ENCODE measurements at regions of chr14 and their contacts with region 1.

Region 1: DNA sequence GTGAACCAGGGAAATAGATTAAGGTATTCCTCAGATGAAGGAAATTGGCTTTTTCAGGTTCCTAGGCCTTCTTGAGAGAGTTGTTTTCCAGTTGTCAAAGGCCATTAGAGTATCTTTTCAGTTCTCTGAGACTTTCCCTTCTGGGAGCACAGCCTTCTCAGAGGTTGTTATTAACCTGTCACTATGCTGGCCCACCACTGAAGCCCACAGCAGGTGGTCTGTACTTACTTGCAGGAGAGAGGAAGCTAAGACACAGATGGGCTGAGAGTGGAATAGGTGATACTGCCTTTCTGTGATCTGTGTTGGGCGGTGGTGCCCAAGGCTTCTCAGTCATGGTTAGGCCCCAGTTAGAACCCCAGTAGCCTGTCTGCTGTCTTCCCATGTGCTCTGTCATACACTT is 22.8 kb upstream of the GALNT16 start:
- DNase-seq: no peak
- H3K4me3 ChIP-seq: no peak overlapping the region
- H3K4me3 Mint-ChIP-seq: no peak overlapping the region
- H3K27ac ChIP-seq: no peak overlapping the region
- H3K27ac Mint-ChIP-seq: peak overlapping the region in 1 of 8 donors; percentile 48
- H3K4me1 ChIP-seq: no peaks in the 10 kb centered on the region
- H3K4me1 Mint-ChIP-seq: no peaks in the 10 kb centered on the region
- H3K27me3 ChIP-seq: no peaks in the 10 kb centered on the region
- H3K27me3 Mint-ChIP-seq: no peaks in the 10 kb centered on the region

Region 2: DNA sequence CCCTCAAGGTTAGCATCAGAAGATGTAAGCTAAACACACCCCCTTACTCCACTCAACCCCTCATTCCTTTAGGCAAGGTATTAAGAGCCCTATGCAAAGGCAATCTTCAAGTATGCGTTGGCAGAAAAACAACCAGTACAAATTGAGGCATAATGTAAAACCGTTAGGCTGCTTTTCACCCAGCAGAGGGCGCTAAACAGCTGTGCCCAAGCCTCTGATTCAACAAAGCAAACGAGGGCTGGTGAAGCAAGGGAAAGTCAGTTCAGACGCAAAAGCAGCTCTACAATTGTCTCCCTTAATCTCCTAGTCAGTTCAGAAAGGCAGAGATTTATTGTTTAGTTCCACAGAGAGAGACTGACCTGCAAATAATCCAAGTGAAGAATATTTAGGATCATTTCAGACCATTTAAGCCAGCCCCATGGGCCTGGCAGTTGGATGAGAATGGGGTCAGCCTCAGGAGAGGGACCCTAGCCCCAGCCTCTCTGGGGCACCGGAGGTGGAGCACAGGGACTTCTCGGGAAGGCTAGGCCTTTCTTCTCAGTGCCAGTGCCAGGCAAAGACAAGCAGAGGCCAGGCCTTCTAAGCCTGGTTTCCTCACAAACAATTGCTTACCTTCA is 107.8 kb before region 1 on chr14:
- CTCF ChIA-PET with region 1: interaction called, 13 read pairs
- POLR2A ChIA-PET with region 1: no interaction called
- DNase-seq: peak; percentile 53 to 81 (median 55)
- H3K4me3 ChIP-seq: no peak overlapping the region
- H3K4me3 Mint-ChIP-seq: peak overlapping the region in 1 of 7 donors; percentile 10
- H3K27ac ChIP-seq: no peak overlapping the region
- H3K27ac Mint-ChIP-seq: peak overlapping the region; percentile 7 to 87 (median 74)
- H3K4me1 ChIP-seq: peaks cover 29% of the 10 kb centered on the region
- H3K4me1 Mint-ChIP-seq: peaks cover 65 to 93% (median 89%) of the 10 kb centered on the region in 3 donors
- H3K27me3 ChIP-seq: no peaks in the 10 kb centered on the region
- H3K27me3 Mint-ChIP-seq: no peaks in the 10 kb centered on the region